Activated naive CD4-positive, alpha-beta T cell treated with anti-CD3 and anti-CD28 coated beads for 36 hours (primary cell): ENCODE measurements at regions of chr12 and their contacts with region 1.

Region 1: DNA sequence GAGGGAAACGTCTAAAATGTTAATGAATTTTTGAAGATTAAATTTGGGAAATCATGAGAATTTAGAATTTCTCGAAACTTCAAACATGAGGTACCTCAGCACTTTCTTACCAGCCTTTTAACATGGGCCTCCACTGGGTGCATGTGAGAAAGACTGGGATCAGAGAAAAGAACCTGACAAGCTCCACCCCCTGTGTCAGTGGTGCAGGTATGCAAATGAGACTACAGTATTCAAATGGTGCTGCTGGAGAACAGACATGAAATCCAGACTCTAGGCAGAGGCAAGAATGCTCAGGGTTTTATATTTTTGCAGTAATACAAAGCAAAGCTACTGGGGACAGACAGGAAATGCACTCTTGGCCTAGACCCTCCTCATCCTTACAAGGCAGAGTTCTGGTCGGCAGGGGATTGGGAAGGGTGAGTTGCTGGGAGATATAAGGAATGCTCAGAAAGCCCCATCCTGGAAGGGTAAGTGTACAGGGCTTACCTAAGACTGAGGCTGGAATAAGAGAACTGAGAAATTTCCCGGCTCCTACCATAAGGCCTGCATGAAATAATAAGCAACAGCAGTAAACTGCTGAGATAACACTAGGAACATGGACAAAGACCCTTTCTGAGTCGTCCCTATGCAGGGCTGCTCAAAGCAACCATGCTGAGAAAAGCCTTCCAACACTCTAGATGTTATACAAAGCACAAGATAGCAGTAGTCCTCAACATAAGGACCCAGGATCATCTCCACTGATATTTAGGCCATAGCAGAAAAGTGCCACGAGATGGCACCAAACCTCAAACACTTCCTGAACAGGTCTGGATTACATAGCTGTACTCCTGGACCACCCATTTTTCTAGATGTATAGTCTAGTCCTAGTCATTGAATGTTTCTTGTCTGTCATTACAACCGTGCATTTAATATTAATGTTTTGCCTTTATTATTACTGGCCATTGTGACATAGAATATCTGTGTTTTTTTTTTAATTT is 260.8 kb downstream of the RASSF9 start:
- DNase-seq: peak; percentile 39
- H3K4me3 Mint-ChIP-seq: no peak overlapping the region
- H3K27ac Mint-ChIP-seq: no peak overlapping the region
- H3K4me1 Mint-ChIP-seq: no peaks in the 10 kb centered on the region
- H3K27me3 Mint-ChIP-seq: no peaks in the 10 kb centered on the region

Region 2: GRCh38 chr12:85468356-85469157 is 106.9 kb before region 1 on chr12:
- CTCF ChIA-PET with region 1: interaction called, 3 read pairs
- intact Hi-C with region 1: loop called (anchors 5 kb)
- DNase-seq: peak; percentile 64
- H3K4me3 Mint-ChIP-seq: peak overlapping the region; percentile 72
- H3K27ac Mint-ChIP-seq: no peak overlapping the region
- H3K4me1 Mint-ChIP-seq: peaks cover 11% of the 10 kb centered on the region
- H3K27me3 Mint-ChIP-seq: peaks cover 11% of the 10 kb centered on the region

Region 3: DNA sequence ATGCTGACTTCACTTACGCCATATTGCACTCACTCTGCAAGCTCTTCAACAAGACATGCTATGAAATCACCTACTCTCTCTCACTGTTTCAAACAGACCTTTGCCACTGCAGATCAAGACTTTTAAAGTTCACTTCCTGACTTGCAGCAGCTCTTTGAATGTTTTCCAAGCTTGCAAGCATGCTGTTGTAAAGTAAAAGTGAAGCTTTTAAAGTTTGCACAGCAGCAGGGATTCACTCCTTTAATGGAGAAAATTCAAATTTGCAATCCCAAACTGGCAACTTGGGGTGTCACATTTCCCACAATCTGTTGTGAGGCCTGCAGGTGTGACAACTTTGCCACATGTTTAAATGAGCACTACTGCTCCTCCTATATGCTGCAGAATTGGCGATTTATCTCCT is 24.5 kb before region 1 on chr12:
- CTCF ChIA-PET with region 1: no interaction called
- intact Hi-C with region 1: no loop called
- DNase-seq: no peak
- H3K4me3 Mint-ChIP-seq: no peak overlapping the region
- H3K27ac Mint-ChIP-seq: no peak overlapping the region
- H3K4me1 Mint-ChIP-seq: no peaks in the 10 kb centered on the region
- H3K27me3 Mint-ChIP-seq: no peaks in the 10 kb centered on the region

Region 4: GRCh38 chr12:85877459-85877858 is 302.1 kb after region 1 on chr12:
- CTCF ChIA-PET with region 1: no interaction called
- intact Hi-C with region 1: no loop called
- DNase-seq: no peak
- H3K4me3 Mint-ChIP-seq: no peak overlapping the region
- H3K27ac Mint-ChIP-seq: no peak overlapping the region
- H3K4me1 Mint-ChIP-seq: no peaks in the 10 kb centered on the region
- H3K27me3 Mint-ChIP-seq: peaks cover 2% of the 10 kb centered on the region